BJ (cell line): ENCODE measurements at regions of chr1 and their contacts with region 1.

Region 1: DNA sequence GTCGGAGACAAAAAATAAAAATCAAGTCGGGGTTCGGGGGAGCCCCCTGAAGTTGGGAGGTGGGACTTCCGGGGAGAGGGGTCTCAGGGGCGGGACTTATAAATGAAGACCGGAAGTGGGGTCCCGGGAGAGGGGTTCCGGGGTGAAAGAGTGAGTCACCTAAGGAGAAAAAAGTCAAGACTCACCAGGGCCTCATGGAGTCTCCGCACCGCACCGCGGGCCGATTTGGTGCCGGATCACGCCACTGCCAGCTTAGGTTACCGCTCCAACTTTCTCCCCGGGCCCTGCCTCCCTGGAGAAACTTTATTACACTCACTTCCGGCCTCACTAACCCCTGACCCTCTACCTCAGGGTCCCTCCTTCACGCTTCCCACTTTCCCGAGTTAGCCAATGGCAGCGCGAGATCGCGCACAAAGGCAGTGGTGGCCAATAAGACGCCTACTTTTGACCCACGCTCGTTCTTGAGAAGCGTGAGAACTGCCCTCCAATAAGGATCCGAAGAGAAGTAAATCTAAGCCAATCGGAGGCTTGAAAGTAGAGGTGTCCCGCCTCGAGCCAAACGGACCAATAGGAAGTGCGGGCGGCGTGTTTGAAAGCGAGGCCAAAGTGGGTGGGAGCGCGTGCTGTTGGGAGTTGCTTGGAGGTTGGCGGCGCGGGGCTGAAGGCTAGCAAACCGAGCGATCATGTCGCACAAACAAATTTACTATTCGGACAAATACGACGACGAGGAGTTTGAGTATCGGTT is at the start of gene CKS1B:
- DNase-seq: peak; percentile 99
- H3K4me3 ChIP-seq: peak within 1 kb of the TSS; percentile 70
- H3K27me3 ChIP-seq: no peaks in the 10 kb centered on the region
- CTCF ChIP-seq: no peak
- polyA plus RNA-seq, gene CKS1B: 111 and 160 TPM in 2 replicates

Region 2: DNA sequence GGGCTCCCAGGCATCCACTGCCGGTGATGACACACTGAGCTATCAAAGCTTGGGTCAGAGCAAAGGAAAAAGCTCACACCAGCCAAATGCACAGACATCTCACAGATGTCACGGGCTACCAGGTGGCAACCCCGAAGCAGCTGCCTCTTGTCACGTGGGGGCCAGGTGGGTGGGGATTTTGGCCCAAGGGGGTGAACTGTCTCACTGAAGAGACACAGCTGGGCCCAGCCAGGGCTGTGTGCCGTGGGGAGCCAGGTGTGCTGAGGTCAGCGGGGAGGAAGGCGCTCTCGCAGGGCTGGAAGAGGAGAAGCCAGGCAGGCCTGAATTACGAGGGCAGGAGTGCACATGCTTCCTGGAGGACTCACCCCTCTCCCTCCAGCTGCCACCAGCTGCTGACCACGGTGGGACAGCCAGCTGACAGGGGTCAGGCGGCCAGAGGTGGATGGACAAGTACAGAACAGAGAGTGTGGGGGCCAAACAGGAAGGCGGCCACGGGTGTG is 136.5 kb before region 1 on chr1:
- CTCF ChIA-PET with region 1: no interaction called
- POLR2A ChIA-PET with region 1: no interaction called
- DNase-seq: no peak
- H3K4me3 ChIP-seq: no peak overlapping the region
- H3K27me3 ChIP-seq: peaks cover 24% of the 10 kb centered on the region
- CTCF ChIP-seq: no peak

Region 3: GRCh38 chr1:154896771-154897391 is 77.4 kb before region 1 on chr1:
- CTCF ChIA-PET with region 1: no interaction called
- POLR2A ChIA-PET with region 1: no interaction called
- DNase-seq: no peak
- H3K4me3 ChIP-seq: no peak overlapping the region
- H3K27me3 ChIP-seq: peaks cover 6% of the 10 kb centered on the region
- CTCF ChIP-seq: no peak

Region 4: GRCh38 chr1:154955718-154956543 is 18.3 kb before region 1 on chr1 and contains the start of gene PBXIP1:
- CTCF ChIA-PET with region 1: interaction called, 30 read pairs
- POLR2A ChIA-PET with region 1: interaction called, 13 read pairs
- DNase-seq: peak; percentile 80
- H3K4me3 ChIP-seq: peak within 1 kb of the TSS; percentile 52
- H3K27me3 ChIP-seq: no peaks in the 10 kb centered on the region
- CTCF ChIP-seq: peak; percentile 47
- polyA plus RNA-seq, gene PBXIP1: 65.6 and 83.1 TPM in 2 replicates

Region 5: DNA sequence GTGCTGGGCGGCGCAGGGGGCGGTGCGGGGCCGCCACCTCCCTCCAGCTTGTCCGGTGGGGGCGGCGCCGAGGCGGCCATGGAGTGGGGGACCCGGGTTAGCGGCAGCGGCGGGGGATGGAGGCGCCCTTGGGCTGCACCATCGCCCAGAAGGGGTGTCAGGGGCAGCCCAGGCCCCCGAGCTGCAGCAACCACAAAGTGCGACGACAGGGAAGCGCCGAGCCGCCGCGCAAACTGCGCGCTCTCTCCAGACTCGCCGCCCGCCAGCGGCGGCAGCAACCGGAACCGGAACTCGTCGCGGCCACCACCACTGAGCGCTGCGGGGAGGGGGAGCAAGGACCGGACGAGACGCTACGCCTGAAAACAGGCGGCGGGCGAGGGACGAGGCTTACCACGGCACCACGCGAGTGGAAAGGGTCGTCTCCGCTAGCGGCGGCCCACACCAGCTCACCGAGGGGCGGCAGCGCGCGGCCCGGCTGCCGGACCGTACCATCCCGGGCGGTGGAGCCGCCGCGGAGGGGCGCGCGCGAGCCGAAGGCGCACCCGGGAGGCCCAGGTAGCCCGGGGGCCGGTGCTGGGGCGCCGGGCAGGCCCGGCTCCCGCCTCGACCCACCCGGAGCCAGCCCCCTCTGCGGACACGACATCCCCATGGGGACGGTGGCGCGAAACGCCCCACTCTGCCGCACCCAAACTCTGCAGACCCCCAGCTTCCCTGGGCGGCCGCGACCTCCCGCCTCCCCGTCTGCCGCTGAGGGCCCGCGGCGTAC is 12.6 kb before region 1 on chr1 and contains the start of gene PYGO2:
- CTCF ChIA-PET with region 1: interaction called, 30 read pairs
- POLR2A ChIA-PET with region 1: interaction called, 13 read pairs
- DNase-seq: no peak
- H3K4me3 ChIP-seq: peak within 1 kb of the TSS; percentile 63
- H3K27me3 ChIP-seq: no peaks in the 10 kb centered on the region
- CTCF ChIP-seq: peak; percentile 37
- polyA plus RNA-seq, gene PYGO2: 18.0 and 21.0 TPM in 2 replicates

Region 6: GRCh38 chr1:154992721-154993571 is 18.7 kb after region 1 on chr1:
- CTCF ChIA-PET with region 1: interaction called, 40 read pairs
- POLR2A ChIA-PET with region 1: interaction called, 3 read pairs
- DNase-seq: no peak
- H3K4me3 ChIP-seq: no peak overlapping the region
- H3K27me3 ChIP-seq: no peaks in the 10 kb centered on the region
- CTCF ChIP-seq: peak; percentile 28

Region 7: GRCh38 chr1:155029513-155030242 is 55.4 kb after region 1 on chr1:
- CTCF ChIA-PET with region 1: no interaction called
- POLR2A ChIA-PET with region 1: no interaction called
- DNase-seq: no peak
- H3K4me3 ChIP-seq: no peak overlapping the region
- H3K27me3 ChIP-seq: 0 out of 2 replicates have a peak, but pooled peaks cover 1% of the 10 kb centered on the region
- CTCF ChIP-seq: no peak

Region 8: DNA sequence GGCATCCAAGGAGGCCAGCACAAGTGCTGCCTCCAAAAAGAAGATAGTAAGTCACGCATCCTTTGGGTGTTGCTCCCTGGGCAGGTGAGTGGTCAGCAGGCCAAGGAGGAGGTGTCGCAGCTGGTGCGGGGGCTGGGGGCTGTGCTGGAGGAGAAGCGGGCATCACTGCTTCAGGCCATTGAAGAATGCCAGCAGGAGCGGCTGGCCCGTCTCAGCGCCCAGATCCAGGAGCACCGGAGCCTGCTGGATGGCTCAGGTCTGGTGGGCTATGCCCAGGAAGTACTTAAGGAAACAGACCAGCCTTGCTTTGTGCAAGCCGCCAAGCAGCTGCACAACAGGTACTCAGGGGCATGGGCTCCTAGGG is 203.7 kb after region 1 on chr1:
- CTCF ChIA-PET with region 1: no interaction called
- POLR2A ChIA-PET with region 1: no interaction called
- DNase-seq: no peak
- H3K4me3 ChIP-seq: no peak overlapping the region
- H3K27me3 ChIP-seq: no peaks in the 10 kb centered on the region
- CTCF ChIP-seq: no peak

Region 9: GRCh38 chr1:156705918-156706656 is 1731.9 kb after region 1 on chr1:
- CTCF ChIA-PET with region 1: no interaction called
- POLR2A ChIA-PET with region 1: interaction called, 11 read pairs
- DNase-seq: no peak
- H3K4me3 ChIP-seq: peak overlapping the region; percentile 58
- H3K27me3 ChIP-seq: no peaks in the 10 kb centered on the region
- CTCF ChIP-seq: peak; percentile 86